ENCODE measurements at regions of chr22 and their contacts with region 1.

Region 1: DNA sequence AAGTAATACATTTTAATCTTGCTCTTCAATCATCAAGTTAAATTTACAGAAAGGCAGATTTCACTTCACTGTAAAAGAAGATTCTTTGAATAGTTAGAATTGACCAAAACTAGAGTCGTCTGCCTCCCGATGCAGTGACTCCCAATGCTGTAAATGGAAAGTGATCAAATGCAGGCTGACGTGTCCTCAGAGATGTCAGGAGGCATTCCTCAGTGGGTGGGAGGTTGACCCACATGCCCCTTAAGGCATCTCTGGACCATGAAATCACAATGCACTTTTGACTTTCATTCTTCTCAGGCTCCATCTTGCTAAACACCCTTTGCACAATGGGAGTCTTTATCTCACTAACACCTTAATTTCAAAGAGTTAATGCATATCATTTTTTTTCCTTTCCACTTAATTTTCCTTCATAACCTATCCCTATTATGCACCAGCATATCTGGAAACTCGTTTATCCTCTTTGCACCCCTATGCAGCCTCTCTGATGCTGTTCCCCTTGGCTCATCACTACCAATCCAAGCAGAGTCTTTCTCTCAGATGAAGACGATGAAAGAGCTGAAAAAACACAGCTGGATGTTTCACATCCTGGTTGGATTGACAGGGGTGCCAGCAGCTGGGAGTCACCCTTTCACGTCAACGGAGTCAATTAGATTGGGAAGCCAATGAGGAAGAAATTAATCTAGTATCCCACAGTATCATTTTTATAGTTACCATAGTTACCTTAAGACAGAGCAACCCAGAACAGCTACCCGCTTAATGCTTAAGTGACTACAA is 18.8 kb upstream of the CECR2 start:
- DNase-seq: no peak
- H3K4me3 ChIP-seq: no peak overlapping the region
- H3K27ac ChIP-seq: no peak overlapping the region
- H3K4me1 ChIP-seq: no peaks in the 10 kb centered on the region
- H3K27me3 ChIP-seq: no peaks in the 10 kb centered on the region
- CTCF ChIP-seq: no peak

Region 2: DNA sequence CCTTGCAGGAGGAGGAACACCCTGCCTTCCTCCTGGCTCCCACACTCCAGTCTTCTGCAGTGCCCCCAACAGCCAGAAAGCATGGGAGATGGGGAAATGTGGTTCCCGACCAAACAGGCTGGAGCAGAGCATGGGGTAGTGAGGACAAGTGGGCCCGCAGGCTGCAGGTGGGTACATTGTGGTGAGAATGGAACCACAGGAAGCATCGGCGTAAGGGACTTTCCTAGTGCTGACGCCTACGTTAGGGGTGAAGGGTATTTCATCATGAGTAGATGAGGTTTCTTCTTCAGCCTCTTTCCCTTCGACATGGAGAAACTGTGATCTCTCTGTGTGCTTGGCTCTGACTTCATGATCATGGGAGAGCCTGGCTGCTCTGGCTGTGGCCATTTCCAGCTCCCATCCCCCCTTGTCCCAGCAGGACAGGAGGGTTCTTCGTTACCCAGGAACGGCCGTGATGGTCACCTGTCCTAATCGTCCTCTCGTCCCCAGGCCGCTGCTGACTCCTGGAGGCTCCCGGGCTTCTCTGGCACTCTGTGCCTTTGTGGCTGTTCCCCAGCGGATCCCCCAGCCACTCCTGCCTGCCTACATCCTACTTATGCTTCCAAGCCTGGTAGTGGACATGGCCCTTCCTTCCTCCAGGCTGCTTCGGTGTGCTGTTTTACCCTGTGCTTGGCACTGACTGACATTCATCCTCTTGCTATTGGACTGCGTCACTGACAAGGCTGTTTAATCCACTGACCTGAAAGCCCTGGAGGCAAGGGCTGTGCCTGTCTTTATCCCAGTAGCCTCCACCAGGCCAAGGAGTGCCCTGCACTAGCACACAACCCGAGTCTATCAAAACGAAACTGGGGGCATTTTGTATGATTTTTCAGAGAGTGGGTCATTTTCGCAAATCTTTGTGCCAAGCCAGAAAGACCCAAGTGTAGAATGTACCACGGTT is 46.4 kb before region 1 on chr22:
- intact Hi-C with region 1: loop called (anchors 5 kb)
- DNase-seq: no peak
- H3K4me3 ChIP-seq: no peak overlapping the region
- H3K27ac ChIP-seq: no peak overlapping the region
- H3K4me1 ChIP-seq: no peaks in the 10 kb centered on the region
- H3K27me3 ChIP-seq: no peaks in the 10 kb centered on the region
- CTCF ChIP-seq: no peak

Measured in kidney (tissue), 22 donors.